ENCODE measurements at regions of chr1 and their contacts with region 1.

Region 1: GRCh38 chr1:32448773-32449456 is 16.0 kb upstream of the ZBTB8B start:
- DNase-seq: no peak
- ATAC-seq: no peak
- H3K4me3 ChIP-seq: no peak overlapping the region
- H3K27ac ChIP-seq: no peak overlapping the region
- H3K4me1 ChIP-seq: no peaks in the 10 kb centered on the region
- H3K27me3 ChIP-seq: no peaks in the 10 kb centered on the region

Region 2: GRCh38 chr1:32386676-32387392 is 62.1 kb before region 1 on chr1:
- intact Hi-C with region 1: no loop called
- DNase-seq: no peak
- ATAC-seq: no peak
- H3K4me3 ChIP-seq: no peak overlapping the region
- H3K27ac ChIP-seq: no peak overlapping the region
- H3K4me1 ChIP-seq: no peaks in the 10 kb centered on the region
- H3K27me3 ChIP-seq: no peaks in the 10 kb centered on the region

Region 3: DNA sequence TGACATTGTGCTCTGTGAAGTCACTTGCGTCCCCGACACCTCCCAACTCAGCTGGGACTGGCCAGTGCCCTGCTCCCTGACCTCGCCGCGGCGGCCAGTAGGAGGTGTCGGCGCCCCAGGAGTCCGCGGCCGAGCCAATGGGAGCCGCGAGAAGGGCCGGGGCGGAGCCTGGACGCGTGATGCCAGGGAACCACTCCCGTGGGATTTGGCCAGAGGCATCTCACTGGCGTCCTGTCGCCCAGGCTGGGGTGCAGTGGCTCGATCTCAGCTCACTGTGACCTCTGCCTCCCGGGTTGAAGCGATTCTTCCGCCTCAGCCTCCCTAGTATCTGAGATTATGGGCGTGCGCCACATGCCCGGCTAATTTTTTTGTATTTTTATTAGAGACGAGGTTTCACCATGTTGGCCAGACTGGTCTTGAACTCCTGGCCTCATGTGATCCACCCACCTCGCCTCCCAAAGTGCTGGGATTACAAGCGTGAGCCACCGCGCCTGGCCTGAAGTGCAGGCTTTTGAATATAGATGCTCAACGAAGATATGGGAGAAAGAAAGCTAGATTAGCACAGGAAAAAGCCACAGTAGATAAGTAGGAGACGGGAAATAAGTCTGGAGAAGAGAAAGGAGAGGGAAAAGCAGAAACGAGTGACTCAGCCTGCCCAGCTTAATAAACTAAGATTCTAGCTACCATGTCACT is 163.4 kb after region 1 on chr1:
- intact Hi-C with region 1: loop called in 1 of 2 experiments (anchors 10 kb)
- DNase-seq: peak; percentile 93
- ATAC-seq: peak; percentile 96
- H3K4me3 ChIP-seq: peak overlapping the region; percentile 37 to 46
- H3K27ac ChIP-seq: no peak overlapping the region
- H3K4me1 ChIP-seq: no peaks in the 10 kb centered on the region
- H3K27me3 ChIP-seq: no peaks in the 10 kb centered on the region

Measured in aorta (tissue), 5 donors.